Cardiac septum (tissue), 1 donor: ENCODE measurements at regions of chr20 and their contacts with region 1.

Region 1: DNA sequence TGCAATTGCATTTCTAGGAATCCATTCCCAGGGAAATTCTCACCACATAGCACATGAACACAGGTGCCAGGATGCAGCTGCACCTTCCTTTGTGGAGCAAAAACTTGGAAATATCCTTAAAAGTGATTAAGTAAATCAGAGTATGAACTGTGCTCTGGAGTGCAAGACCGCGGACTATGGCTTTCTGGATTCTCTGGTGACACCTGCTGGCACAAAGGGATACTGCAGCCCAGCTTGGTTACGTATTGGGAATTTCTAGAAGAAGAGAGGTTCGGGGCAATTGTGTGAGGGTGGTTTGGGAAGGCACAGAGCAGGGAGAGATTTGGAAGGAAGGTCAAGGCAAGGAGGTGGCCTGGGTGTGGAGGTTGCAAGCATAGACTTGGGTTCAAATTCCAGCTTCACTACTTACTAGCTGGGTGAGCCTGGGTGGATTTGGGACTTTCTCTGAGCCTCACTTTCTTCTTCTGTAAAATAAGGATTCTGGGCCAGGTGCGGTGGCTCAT is 15.9 kb upstream of the PEDS1 start:
- DNase-seq: peak; percentile 88

Region 2: GRCh38 chr20:49982346-49983122 is 186.8 kb before region 1 on chr20 and contains the start of gene SNAI1:
- intact Hi-C with region 1: loop called (anchors 5 kb)
- DNase-seq: peak; percentile 92
- total RNA-seq, gene SNAI1: 4.3 TPM

Region 3: GRCh38 chr20:50120897-50121693 is 48.3 kb before region 1 on chr20:
- intact Hi-C with region 1: loop called (anchors 1 kb)
- DNase-seq: no peak

Region 4: DNA sequence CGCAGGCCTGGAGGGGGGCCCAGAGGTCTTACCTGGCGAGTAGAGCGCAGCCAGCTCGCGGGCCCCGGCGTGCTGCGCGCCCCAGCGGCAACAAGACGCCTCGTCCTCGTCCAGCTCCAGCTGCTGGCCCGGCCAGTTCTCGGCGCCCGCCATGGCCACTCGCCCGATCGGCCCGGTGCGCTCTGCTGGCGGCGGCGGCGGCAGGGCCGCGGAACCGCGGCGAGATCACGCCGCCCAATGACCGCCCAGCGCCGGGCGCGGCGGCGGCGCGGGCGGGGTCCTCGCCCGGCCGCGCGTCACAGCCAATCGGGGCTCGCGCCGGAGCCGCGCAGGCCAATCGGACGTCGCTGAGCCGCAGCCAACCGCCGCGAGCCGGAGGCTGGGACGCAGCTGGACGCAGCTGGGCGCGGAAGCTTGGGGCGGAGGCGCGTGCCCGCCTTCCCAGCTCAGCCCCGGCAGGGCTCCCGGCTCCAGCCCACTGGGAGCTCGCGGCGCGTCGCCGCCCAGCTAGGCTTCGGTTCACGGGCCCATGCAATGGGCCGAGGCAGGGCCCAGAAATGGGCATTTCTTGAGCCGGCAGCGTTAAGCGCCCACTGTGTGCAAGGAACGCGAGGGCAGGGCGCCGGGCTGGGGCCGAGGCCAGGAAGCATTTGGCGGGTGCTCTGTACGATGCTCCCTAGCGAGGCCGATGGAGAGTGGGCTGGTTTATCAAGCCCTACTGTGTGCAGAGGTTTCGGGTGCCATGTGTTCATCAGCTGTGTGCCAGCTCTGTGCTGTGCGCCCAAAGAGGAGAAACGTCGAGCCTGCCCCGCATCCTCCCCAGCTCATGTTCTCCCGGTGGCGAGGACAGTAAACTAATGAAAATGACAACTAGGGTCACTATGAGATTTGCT is 15.6 kb before region 1 on chr20 and contains the start of gene PEDS1:
- intact Hi-C with region 1: loop called (anchors 2 kb)
- DNase-seq: peak; percentile 95
- total RNA-seq, gene PEDS1: 15.2 TPM

Region 5: GRCh38 chr20:50215101-50215690 is 45.8 kb after region 1 on chr20:
- intact Hi-C with region 1: no loop called
- DNase-seq: no peak